ENCODE measurements at regions of chr20 and their contacts with region 1.

Region 1: DNA sequence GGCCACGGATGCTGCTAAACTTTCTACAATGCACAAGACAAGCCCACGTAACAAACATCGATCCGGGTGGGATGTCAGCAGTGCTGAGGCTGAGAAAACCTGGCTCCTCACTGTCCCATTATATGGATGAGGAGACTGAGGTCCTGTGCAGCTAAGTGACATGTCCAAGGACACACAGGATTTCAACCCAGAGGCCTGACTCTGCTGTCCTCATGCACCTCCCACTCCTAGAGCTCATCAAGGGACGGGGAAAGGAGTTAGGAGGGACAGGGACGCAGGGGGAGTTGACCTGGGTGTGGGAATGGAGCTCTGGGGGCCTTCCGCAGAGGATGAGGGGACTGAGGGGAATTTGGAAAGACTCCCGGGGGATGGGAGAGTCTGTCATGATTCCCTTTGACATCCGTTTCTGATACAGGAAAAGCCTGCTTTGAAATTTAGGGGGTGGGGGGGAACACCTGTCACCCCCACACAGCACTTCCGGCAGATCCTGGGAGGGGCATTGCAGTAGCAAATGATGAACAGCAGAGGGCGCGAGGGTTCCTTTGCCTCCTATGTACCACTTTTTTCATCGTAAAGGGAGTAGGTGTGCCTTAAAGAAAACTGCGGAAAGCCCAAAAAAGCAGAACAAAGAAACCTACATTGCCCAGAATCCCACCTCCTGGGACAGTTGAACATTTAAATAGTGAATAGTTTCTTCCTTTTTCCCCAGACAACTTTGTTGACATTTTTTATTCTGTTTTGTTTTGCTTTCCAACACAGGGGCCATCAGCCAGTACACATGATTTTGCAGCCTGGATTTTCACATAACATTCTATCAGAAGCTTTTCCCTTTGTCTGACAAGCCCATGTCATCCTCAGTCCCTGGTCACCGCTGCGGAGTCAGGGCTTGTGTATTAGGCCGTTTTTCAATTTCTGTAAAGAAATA is 48.6 kb downstream of the SLC2A10 start:
- DNase-seq: peak; percentile 60
- ATAC-seq: peak; percentile 89
- H3K4me3 ChIP-seq: no peak overlapping the region
- H3K27ac ChIP-seq: no peak overlapping the region
- H3K4me1 ChIP-seq: peaks cover 4% of the 10 kb centered on the region
- H3K27me3 ChIP-seq: no peaks in the 10 kb centered on the region
- CTCF ChIP-seq: peak; percentile 96
- POLR2A ChIP-seq: no peak
- RAD21 ChIP-seq: peak; percentile 92

Region 2: DNA sequence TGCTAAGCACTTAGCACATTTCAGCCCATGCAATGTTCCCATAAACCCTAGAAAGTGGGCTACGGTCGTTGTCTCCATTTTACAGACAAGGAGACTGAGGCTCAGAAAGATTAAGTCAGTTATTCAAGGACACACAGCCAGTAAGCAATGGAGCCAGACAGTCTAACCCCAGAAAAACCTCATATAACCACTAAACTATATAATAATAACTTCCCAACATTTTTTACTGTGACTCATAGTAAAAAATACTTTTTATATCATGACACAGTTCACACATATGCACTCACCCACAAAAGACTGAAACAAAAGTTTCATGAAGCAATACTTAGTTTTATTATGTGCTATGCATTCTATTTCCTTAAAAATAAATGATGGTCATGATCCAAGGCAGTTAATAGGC is 70.5 kb after region 1 on chr20:
- CTCF ChIA-PET with region 1: no interaction called
- POLR2A ChIA-PET with region 1: no interaction called
- dilution Hi-C with region 1: no loop called
- in situ Hi-C with region 1: no loop called
- intact Hi-C with region 1: loop called (anchors 2 kb)
- DNase-seq: peak; percentile 88
- ATAC-seq: peak; percentile 84
- H3K4me3 ChIP-seq: no peak overlapping the region
- H3K27ac ChIP-seq: peak overlapping the region; percentile 33; the same call in 1 of the 2 replicates
- H3K4me1 ChIP-seq: peaks cover 18% of the 10 kb centered on the region
- H3K27me3 ChIP-seq: no peaks in the 10 kb centered on the region
- CTCF ChIP-seq: no peak
- POLR2A ChIP-seq: no peak
- RAD21 ChIP-seq: no peak

Region 3: GRCh38 chr20:46894971-46895905 is 137.2 kb after region 1 on chr20:
- CTCF ChIA-PET with region 1: no interaction called
- POLR2A ChIA-PET with region 1: no interaction called
- dilution Hi-C with region 1: no loop called
- in situ Hi-C with region 1: no loop called
- intact Hi-C with region 1: loop called (anchors 5 kb)
- DNase-seq: peak; percentile 68
- ATAC-seq: peak; percentile 50
- H3K4me3 ChIP-seq: peak overlapping the region; percentile 83
- H3K27ac ChIP-seq: peak overlapping the region; percentile 6
- H3K4me1 ChIP-seq: 0 out of 2 replicates have a peak, but pooled peaks cover 2% of the 10 kb centered on the region
- H3K27me3 ChIP-seq: no peaks in the 10 kb centered on the region
- CTCF ChIP-seq: no peak
- POLR2A ChIP-seq: no peak
- RAD21 ChIP-seq: peak; percentile 9; the same call in 1 of the 2 replicates

Region 4: DNA sequence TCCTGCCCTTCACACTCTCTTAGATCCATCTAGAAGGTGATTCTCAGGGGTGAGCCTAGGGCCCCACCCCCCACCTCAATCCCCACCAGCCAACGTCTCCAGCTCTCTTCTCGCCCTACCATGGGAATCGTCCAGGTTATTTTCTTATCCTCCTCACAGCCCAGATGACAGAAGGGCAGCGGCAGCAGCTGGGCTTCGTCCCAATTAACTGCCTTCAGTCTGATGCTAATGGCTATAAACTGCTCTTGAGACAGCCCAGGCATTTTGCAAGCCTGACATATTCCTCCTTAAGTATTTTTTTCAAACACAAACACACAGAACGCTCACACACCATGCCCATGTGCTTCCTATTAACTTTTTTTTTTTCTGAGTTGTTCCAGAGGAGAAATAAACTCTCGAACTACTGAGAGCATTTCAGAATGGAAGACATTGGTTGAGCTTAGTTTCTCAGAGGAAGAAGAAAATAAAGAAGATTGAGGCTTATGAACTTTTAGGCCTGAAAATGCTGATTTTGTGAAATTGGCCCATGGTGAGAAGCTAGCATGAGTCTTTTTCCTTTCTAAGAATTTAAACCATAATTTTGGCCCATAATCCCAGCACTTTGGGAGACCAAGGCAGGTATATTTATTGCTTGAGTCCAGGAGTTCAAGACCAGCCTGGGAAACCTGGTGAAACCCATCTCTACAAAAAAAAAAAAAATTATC is 261.3 kb after region 1 on chr20:
- CTCF ChIA-PET with region 1: interaction called, 4 read pairs
- POLR2A ChIA-PET with region 1: no interaction called
- dilution Hi-C with region 1: no loop called
- in situ Hi-C with region 1: loop called (anchors 25 kb)
- intact Hi-C with region 1: loop called (anchors 1 kb)
- DNase-seq: peak; percentile 94
- ATAC-seq: peak; percentile 87
- H3K4me3 ChIP-seq: no peak overlapping the region
- H3K27ac ChIP-seq: peak overlapping the region; percentile 73; the same call in 1 of the 2 replicates
- H3K4me1 ChIP-seq: peaks cover 11% of the 10 kb centered on the region; the same call in 1 of the 2 replicates
- H3K27me3 ChIP-seq: no peaks in the 10 kb centered on the region
- CTCF ChIP-seq: no peak
- POLR2A ChIP-seq: no peak
- RAD21 ChIP-seq: no peak

Region 5: DNA sequence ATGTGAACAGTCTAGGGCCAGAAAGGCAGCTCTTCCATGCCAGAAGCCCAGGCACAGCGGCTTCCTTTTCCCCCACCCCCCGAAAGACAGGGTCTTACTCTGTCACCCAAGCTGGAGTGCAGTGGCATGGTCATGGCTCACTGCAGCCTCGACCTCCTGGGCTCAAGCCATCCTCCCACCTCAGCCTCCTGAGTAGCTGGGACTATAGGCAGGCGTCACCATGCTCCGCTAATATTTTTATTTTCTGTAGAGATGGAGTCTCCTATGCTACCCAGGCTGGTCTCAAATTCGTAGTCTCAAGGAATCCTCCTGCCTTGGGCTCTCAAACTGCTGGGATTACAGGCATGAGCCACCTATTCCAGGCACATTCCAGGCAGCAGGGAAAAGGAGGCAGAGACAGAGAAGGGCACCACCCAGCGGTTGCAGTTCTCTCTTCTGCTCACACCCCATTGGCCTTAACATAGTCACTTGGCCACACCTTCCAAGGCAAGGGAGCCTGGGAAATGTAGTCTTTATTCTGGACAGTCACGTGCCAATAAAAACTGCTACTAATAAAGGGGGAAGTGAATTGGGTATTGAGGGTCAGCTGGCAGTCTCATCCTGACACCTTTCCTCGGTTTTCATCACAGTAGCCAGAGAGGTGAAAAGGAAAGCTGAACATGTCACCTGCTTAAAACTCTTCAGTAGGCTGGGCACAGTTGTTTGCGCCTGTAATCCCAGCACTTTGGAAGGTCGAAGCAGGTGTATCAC is 392.6 kb after region 1 on chr20:
- CTCF ChIA-PET with region 1: interaction called, 3 read pairs
- POLR2A ChIA-PET with region 1: no interaction called
- dilution Hi-C with region 1: no loop called
- in situ Hi-C with region 1: loop called (anchors 5 kb)
- intact Hi-C with region 1: loop called (anchors 1 kb)
- DNase-seq: peak; percentile 73
- ATAC-seq: peak; percentile 94
- H3K4me3 ChIP-seq: no peak overlapping the region
- H3K27ac ChIP-seq: no peak overlapping the region
- H3K4me1 ChIP-seq: peaks cover 8% of the 10 kb centered on the region; the same call in 1 of the 2 replicates
- H3K27me3 ChIP-seq: no peaks in the 10 kb centered on the region
- CTCF ChIP-seq: peak; percentile 81
- POLR2A ChIP-seq: no peak
- RAD21 ChIP-seq: peak; percentile 89

Region 6: DNA sequence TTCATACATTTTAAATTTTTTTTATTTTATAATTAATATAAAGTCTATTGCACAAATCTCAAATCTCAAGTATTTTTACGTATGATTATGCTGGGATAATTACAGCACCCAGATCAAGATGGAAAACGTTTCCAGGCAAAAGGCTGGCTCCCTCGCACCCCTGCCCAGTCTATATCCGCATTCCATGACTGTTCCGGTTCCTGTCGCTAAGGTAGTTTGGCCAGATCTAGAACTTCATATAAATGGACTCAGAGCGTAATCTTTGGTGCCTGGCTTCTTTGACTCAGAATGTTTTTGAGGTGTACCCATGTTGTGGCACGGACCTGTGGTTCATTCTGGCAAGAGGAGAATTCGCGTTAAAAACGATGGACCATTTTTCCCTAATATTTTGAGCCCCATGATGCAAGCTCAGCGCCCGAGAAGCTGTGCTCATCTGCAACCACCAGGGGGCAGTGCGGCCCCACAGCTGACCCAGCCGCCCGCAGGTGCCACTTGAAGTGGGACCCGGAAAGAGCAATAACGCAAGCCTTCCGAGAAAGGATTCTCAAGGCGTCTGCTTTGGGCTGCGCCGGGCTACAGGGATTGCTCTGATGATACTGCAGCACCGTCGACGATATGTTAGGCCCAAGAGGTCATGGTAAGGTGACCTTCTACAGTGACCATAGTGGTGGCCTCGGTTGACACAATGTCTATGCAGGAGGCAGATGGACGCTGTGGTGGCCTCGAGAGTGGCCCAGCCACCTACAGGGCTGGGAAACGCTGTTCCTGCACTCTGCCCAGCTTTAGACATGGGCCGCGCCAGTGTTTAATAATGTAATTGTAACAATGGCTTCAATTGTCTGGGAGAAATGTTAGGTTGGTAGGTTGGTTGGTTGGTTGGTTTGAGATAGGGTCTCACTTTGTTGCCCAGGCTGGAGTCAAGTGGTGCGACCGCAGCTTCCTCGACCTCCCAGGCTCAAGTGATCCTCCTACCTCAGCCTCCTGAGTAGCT is 438.4 kb after region 1 on chr20:
- CTCF ChIA-PET with region 1: interaction called, 3 read pairs
- POLR2A ChIA-PET with region 1: no interaction called
- dilution Hi-C with region 1: no loop called
- in situ Hi-C with region 1: loop called (anchors 10 kb)
- intact Hi-C with region 1: loop called (anchors 2 kb)
- DNase-seq: peak; percentile 60
- ATAC-seq: peak; percentile 94
- H3K4me3 ChIP-seq: no peak overlapping the region
- H3K27ac ChIP-seq: no peak overlapping the region
- H3K4me1 ChIP-seq: peaks cover 3% of the 10 kb centered on the region; the same call in 1 of the 2 replicates
- H3K27me3 ChIP-seq: no peaks in the 10 kb centered on the region
- CTCF ChIP-seq: peak; percentile 96
- POLR2A ChIP-seq: peak; percentile 42; the same call in 1 of the 2 replicates
- RAD21 ChIP-seq: peak; percentile 96

Region 7: DNA sequence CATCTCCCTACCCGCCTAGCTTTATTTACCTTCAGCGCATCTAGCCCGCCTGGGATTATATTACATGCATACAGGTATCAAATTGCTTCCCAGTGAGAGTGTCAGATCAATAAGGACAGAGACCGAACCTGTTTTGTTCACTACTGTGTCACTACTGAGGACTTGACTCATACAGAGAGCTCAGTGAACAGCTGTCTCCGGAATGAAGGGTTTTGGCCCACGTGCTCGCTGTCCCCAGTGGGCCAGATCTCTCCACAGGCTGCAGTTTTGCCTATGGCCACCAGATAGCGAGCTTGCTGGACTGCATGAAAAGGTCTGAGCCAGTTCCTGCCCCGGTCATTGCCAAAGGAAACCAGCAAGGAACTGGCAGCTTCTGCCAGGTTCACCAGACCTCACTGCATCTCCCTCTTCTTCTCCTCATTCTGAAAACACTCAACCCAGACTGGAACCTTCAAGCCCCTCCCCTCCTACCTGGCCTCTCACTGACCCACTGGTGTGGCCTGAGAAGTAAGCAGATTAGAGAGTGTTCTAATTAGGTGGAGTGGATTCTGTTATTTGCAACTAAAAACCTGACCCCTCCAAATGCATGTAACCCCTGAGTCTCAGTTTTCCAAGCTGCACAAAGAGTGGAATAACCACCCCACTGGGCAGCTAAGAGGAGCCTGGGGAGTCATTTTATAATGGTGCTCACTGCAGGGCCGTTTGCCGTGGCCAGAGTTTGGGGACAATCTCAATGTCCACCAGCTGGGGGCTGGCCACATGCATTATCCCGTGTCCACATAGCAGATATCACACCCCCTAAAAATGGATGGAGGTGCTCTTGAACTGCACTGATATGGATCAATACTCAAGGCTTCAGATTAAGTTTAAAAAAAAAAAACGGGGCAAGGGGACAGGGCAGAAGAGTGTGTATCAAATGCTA is 447.8 kb after region 1 on chr20:
- CTCF ChIA-PET with region 1: interaction called, 3 read pairs
- POLR2A ChIA-PET with region 1: no interaction called
- dilution Hi-C with region 1: no loop called
- in situ Hi-C with region 1: loop called (anchors 10 kb)
- intact Hi-C with region 1: no loop called
- DNase-seq: peak; percentile 79
- ATAC-seq: peak; percentile 83
- H3K4me3 ChIP-seq: no peak overlapping the region
- H3K27ac ChIP-seq: no peak overlapping the region
- H3K4me1 ChIP-seq: peaks cover 2% of the 10 kb centered on the region; the same call in 1 of the 2 replicates
- H3K27me3 ChIP-seq: no peaks in the 10 kb centered on the region
- CTCF ChIP-seq: peak; percentile 63
- POLR2A ChIP-seq: no peak
- RAD21 ChIP-seq: peak; percentile 65